ENCODE measurements at regions of chr9 and their contacts with region 1.

Region 1: GRCh38 chr9:128007566-128008138 is 26.9 kb upstream of the EEIG1 start:
- DNase-seq: peak; percentile 92
- ATAC-seq: peak; percentile 80
- H3K4me3 ChIP-seq: peak overlapping the region in 3 of 5 experiments; percentile 0 to 35 (median 10)
- H3K4me3 Mint-ChIP-seq: peak overlapping the region; percentile 82
- H3K27ac ChIP-seq: peak overlapping the region; percentile 81 to 93
- H3K27ac Mint-ChIP-seq: peak overlapping the region; percentile 91
- H3K4me1 ChIP-seq: peaks cover 56 to 72% of the 10 kb centered on the region in 2 donors
- H3K4me1 Mint-ChIP-seq: peaks cover 60% of the 10 kb centered on the region
- H3K27me3 ChIP-seq: no peaks in the 10 kb centered on the region
- H3K27me3 Mint-ChIP-seq: no peaks in the 10 kb centered on the region
- CTCF ChIP-seq: no peak

Region 2: GRCh38 chr9:127970401-127971313 is 37.0 kb before region 1 on chr9:
- CTCF ChIA-PET with region 1: interaction called, 7 read pairs
- POLR2A ChIA-PET with region 1: interaction called, 10 read pairs
- intact Hi-C with region 1: loop called (anchors 5 kb)
- DNase-seq: peak; percentile 87
- ATAC-seq: peak; percentile 69
- H3K4me3 ChIP-seq: peak overlapping the region in 3 of 5 experiments; percentile 5 to 18 (median 6)
- H3K4me3 Mint-ChIP-seq: peak overlapping the region; percentile 77
- H3K27ac ChIP-seq: peak overlapping the region; percentile 91 to 97
- H3K27ac Mint-ChIP-seq: peak overlapping the region; percentile 96
- H3K4me1 ChIP-seq: peaks cover 99 to 100% of the 10 kb centered on the region in 2 donors
- H3K4me1 Mint-ChIP-seq: peaks cover 98% of the 10 kb centered on the region
- H3K27me3 ChIP-seq: no peaks in the 10 kb centered on the region
- H3K27me3 Mint-ChIP-seq: no peaks in the 10 kb centered on the region
- CTCF ChIP-seq: no peak

Region 3: DNA sequence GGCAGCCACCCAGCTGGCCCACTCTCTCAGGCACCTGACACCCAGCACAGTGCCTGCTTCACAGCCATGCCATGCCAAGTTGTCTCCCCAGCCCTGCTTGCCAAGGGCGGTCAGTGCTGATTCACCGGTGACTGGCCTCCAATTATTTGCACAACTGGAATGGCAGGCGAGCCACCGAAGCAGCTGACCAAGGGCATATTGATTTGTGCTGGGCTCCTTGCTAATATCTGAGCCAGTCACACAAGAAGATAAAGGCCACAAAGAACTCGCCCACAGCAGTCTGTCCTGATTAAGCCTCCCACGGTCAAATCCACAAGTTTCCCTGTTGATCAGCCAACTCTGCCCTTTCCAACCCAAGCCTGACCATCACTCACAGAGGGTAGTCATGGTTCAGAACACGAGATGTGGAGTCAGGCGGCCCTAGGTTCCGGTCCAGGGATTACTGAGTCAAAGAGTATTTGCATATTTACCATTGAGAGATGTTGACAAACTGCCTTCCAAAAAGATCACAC is 20.5 kb before region 1 on chr9:
- CTCF ChIA-PET with region 1: interaction called, 7 read pairs
- POLR2A ChIA-PET with region 1: interaction called, 27 read pairs
- intact Hi-C with region 1: loop called (anchors 1 kb)
- DNase-seq: peak; percentile 77
- ATAC-seq: peak; percentile 26
- H3K4me3 ChIP-seq: no peak overlapping the region
- H3K4me3 Mint-ChIP-seq: peak overlapping the region; percentile 64
- H3K27ac ChIP-seq: peak overlapping the region; percentile 61 to 80
- H3K27ac Mint-ChIP-seq: peak overlapping the region; percentile 91
- H3K4me1 ChIP-seq: peaks cover 59 to 75% of the 10 kb centered on the region in 2 donors
- H3K4me1 Mint-ChIP-seq: peaks cover 64% of the 10 kb centered on the region
- H3K27me3 ChIP-seq: no peaks in the 10 kb centered on the region
- H3K27me3 Mint-ChIP-seq: no peaks in the 10 kb centered on the region
- CTCF ChIP-seq: no peak

Region 4: DNA sequence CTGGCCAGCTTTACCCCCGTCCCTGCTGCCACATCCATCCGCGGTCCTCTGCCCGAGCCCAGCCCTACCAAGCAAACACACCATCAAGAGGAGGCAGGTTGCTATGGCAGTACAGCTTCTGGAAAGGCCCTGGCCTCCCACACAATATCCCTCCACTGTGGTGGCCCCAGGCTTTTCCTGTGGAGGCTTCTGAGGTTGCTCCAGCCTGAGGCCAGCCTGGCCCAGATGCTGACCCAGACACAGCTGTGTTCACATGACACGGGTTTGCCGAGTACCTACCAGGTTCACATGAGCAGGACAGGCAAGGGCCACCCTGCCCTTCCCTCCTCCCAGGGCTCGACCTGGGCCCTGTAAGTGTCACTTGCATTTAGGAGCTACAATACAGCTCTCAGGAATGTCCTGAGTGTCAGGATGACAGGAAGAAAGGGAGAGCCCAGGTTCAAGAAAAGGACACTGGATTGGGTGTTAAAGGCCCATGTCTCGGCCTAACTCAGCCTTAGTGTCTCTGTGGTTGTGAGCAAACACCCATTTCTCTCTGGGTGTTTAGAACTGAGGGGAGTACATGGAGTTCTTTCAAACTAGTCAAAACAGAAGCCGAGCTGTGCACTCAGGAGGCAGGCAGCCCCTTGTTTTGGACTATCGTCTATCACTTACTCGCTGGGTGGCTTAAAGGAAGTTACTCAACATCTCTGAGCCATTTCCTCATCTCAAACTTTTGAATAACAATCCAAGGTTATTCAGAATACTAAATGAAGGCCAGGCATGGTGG is 19.3 kb after region 1 on chr9:
- CTCF ChIA-PET with region 1: interaction called, 27 read pairs
- POLR2A ChIA-PET with region 1: interaction called, 15 read pairs
- intact Hi-C with region 1: loop called (anchors 1 kb)
- DNase-seq: no peak
- ATAC-seq: peak; percentile 4
- H3K4me3 ChIP-seq: peak overlapping the region in 1 of 5 experiments; percentile 22
- H3K4me3 Mint-ChIP-seq: peak overlapping the region; percentile 81
- H3K27ac ChIP-seq: peak overlapping the region; percentile 88 to 100
- H3K27ac Mint-ChIP-seq: peak overlapping the region; percentile 96
- H3K4me1 ChIP-seq: peaks cover 73 to 94% of the 10 kb centered on the region in 2 donors
- H3K4me1 Mint-ChIP-seq: peaks cover 78% of the 10 kb centered on the region
- H3K27me3 ChIP-seq: no peaks in the 10 kb centered on the region
- H3K27me3 Mint-ChIP-seq: no peaks in the 10 kb centered on the region
- CTCF ChIP-seq: no peak